Sciatic nerve (tissue), 2 donors: ENCODE measurements at regions of chr1 and their contacts with region 1.

Region 1: GRCh38 chr1:229625915-229626831 is at the starts of genes TAF5L and URB2:
- DNase-seq: peak; percentile 91
- ATAC-seq: peak; percentile 98
- total RNA-seq, gene TAF5L: 15.2 TPM
- total RNA-seq, gene URB2: 8.2 TPM

Region 2: DNA sequence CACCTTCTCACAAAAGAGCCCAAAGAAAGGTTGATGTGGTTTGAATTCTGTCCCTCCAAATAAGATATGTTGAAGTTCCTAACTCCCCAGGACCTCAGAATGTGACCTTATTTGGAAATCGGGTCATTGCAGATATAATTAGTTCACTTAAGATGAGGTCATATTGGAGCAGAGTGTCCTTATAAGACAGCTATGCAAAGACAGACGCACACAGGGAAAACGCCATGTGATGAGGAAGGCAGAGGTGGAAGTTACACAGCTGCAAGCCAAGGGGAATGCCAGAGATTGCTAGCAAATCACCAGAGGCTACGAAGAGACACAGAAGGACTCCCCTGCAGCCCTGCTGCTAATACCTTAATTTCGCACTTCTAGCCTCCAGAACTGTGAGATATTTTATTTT is 62.5 kb before region 1 on chr1:
- intact Hi-C with region 1: loop called (anchors 10 kb)
- DNase-seq: no peak
- ATAC-seq: peak; percentile 21